Dendritic cell treated with granulocyte-macrophage colony-stimulating factor and Interleukin-4, amounts not matched to agents 40 ng/mL and 50 ng/mL, for 4 days (primary cell): ENCODE measurements at regions of chr21 and their contacts with region 1.

Region 1: GRCh38 chr21:33266050-33266788 is at the start of gene IL10RB:
- H3K4me3 Mint-ChIP-seq: peak within 1 kb of the TSS; percentile 92
- H3K27ac Mint-ChIP-seq: peak within 1 kb of the TSS; percentile 93
- H3K4me1 Mint-ChIP-seq: peaks cover 76% of the 10 kb centered on the region
- H3K27me3 Mint-ChIP-seq: no peaks in the 10 kb centered on the region

Region 2: DNA sequence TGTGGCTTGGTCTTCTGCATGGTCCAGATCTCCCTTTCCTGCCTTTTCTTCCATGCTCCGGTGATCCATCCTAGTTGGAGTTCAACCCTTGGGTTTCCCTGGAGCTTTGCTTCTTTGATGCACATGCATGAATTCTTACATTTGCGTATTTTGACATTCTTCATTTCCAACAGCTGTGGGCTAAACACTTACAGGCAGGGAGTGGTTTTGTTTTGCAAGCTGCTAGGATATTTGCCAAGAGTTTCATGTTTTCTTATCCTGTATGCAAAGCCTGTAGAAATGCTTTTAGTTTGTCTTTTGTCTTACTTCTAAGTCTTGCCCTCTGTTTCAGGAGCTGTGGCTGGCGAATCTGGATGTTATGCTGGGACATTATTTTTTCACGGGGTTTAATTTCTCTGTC is 404.4 kb before region 1 on chr21:
- intact Hi-C with region 1: no loop called
- H3K4me3 Mint-ChIP-seq: no peak overlapping the region
- H3K27ac Mint-ChIP-seq: no peak overlapping the region
- H3K4me1 Mint-ChIP-seq: no peaks in the 10 kb centered on the region
- H3K27me3 Mint-ChIP-seq: peaks cover 33% of the 10 kb centered on the region

Region 3: GRCh38 chr21:32962268-32962667 is 304.0 kb before region 1 on chr21:
- intact Hi-C with region 1: no loop called
- H3K4me3 Mint-ChIP-seq: no peak overlapping the region
- H3K27ac Mint-ChIP-seq: no peak overlapping the region
- H3K4me1 Mint-ChIP-seq: no peaks in the 10 kb centered on the region
- H3K27me3 Mint-ChIP-seq: peaks cover 62% of the 10 kb centered on the region

Region 4: GRCh38 chr21:33229784-33230544 is 36.3 kb before region 1 on chr21 and contains the start of gene IFNAR2:
- intact Hi-C with region 1: loop called (anchors 5 kb)
- H3K4me3 Mint-ChIP-seq: peak within 1 kb of the TSS; percentile 92
- H3K27ac Mint-ChIP-seq: peak within 1 kb of the TSS; percentile 95
- H3K4me1 Mint-ChIP-seq: peaks cover 47% of the 10 kb centered on the region
- H3K27me3 Mint-ChIP-seq: no peaks in the 10 kb centered on the region

Region 5: GRCh38 chr21:33324291-33325221 is 58.3 kb after region 1 on chr21 and contains the start of gene IFNAR1:
- intact Hi-C with region 1: loop called (anchors 10 kb)
- H3K4me3 Mint-ChIP-seq: no peak within 1 kb of the TSS
- H3K27ac Mint-ChIP-seq: no peak within 1 kb of the TSS
- H3K4me1 Mint-ChIP-seq: peaks cover 21% of the 10 kb centered on the region
- H3K27me3 Mint-ChIP-seq: no peaks in the 10 kb centered on the region